Activated CD4-positive, alpha-beta T cell treated with anti-CD3 and anti-CD28 coated beads for 36 hours (primary cell): ENCODE measurements at regions of chr6 and their contacts with region 1.

Region 1: DNA sequence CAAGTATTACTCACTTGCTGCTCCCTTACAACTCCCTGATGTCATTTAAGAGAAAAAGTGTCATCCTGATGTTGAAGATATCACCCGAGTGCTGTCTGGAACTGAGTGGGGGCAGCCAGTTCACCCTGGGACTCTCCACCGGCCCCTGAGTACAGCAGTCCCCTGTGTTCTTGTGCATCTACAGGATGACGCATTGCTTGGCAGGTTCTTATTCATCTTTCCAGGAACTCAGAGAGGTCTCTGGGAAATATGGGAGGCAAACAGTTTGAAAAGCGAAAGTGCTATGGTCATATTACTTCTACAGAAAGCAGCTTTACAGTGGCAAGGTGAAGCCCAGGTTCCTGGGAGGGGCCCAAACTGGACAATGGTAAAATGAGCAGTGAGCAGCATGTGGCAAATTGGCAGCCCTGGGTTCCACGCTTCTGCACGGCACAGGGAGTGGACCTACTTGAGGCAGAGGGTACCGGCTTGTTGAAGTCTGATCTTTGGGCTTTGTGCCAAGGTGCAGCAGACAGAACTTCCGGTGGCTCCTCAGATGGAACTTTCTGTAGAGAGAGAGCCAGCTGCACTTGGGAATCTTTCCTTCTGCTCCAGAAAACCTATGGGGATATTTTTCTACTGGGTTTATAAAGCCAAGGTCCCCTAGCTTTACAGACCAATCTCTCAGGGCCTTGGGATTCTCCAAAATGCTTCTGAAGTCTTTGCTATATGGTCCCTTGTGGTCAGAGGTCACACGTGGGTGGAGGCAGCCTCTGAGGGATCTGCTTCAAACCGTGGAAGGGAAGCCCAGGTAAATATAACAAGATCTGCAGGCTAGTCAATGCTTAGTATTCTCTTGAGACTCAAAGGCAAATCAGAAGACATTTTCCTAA is 128.3 kb downstream of the MAP3K7 start:
- DNase-seq: peak; percentile 93
- ATAC-seq: peak; percentile 89
- H3K4me3 Mint-ChIP-seq: peak overlapping the region; percentile 63
- H3K27ac Mint-ChIP-seq: peak overlapping the region; percentile 99
- H3K4me1 Mint-ChIP-seq: peaks cover 92% of the 10 kb centered on the region
- H3K27me3 Mint-ChIP-seq: no peaks in the 10 kb centered on the region

Region 2: DNA sequence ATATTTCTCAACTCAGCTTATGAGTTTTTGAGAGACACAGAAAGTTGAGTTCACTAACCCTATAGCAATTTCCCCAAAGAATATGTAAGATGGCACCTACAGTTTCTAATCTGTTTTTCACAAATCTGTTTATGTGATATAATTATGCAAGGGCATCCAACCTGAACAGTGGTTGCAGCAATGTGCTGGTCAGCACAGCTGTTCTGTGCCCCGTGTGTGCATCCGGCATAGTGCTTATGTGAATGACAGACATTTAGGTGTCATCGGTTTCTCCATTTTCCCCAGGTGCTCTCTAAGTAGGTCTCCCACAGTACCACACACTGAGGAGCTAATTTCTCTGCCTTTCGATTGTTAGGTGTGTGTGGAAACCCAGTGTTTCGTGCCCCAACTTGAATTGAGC is 154.3 kb before region 1 on chr6:
- CTCF ChIA-PET with region 1: no interaction called
- POLR2A ChIA-PET with region 1: no interaction called
- intact Hi-C with region 1: no loop called
- DNase-seq: no peak
- ATAC-seq: no peak
- H3K4me3 Mint-ChIP-seq: no peak overlapping the region
- H3K27ac Mint-ChIP-seq: no peak overlapping the region
- H3K4me1 Mint-ChIP-seq: peaks cover 39% of the 10 kb centered on the region
- H3K27me3 Mint-ChIP-seq: peaks cover 20% of the 10 kb centered on the region

Region 3: DNA sequence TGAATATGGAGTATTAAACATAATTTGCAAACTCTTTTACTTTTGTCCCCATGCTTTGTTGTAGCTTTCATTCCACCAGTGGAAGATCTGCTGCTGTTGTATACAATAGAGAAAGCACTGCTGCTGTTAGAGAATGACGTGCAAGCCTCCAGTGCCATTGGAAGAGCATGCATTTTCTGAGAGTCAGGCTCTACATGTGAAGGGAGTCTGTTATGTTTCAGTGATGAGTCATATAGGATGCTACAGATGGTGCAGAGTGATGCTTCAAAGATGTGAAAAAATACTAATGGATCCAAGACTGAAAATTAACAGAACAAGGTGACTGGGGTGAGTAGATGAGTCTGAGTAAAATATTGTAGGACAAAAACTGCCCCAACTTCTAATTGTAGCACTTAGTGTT is 139.5 kb before region 1 on chr6:
- CTCF ChIA-PET with region 1: interaction called, 5 read pairs
- POLR2A ChIA-PET with region 1: no interaction called
- intact Hi-C with region 1: loop called in 1 of 2 experiments (anchors 1 kb)
- DNase-seq: peak; percentile 40
- ATAC-seq: peak; percentile 82
- H3K4me3 Mint-ChIP-seq: no peak overlapping the region
- H3K27ac Mint-ChIP-seq: peak overlapping the region; percentile 80
- H3K4me1 Mint-ChIP-seq: peaks cover 43% of the 10 kb centered on the region
- H3K27me3 Mint-ChIP-seq: peaks cover 6% of the 10 kb centered on the region

Region 4: DNA sequence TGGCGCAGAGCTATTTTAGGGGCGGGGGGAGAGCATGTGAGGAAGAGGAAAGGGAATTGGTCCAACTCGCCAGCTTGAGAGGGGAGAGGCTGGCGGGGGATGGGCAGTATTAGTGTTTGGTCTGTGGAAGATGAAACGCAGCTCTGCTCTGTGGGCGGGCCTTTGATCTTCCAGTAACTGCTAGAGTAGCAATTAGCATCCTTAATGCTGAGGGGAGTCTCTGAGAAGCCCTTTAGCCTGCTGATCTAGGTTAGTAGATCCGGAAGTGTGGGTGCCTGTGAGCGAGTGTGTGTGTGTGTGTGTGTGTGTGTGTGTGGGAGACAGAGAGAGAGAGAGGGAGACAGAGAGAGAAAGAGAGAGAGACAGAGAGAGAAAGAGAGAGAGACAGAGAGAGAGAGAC is 44.7 kb before region 1 on chr6:
- CTCF ChIA-PET with region 1: interaction called, 29 read pairs
- POLR2A ChIA-PET with region 1: interaction called, 10 read pairs
- intact Hi-C with region 1: loop called (anchors 1 kb)
- DNase-seq: peak; percentile 91
- ATAC-seq: peak; percentile 51
- H3K4me3 Mint-ChIP-seq: peak overlapping the region; percentile 67
- H3K27ac Mint-ChIP-seq: peak overlapping the region; percentile 93
- H3K4me1 Mint-ChIP-seq: peaks cover 72% of the 10 kb centered on the region
- H3K27me3 Mint-ChIP-seq: no peaks in the 10 kb centered on the region

Region 5: GRCh38 chr6:90444160-90444714 is 14.4 kb before region 1 on chr6:
- CTCF ChIA-PET with region 1: interaction called, 12 read pairs
- POLR2A ChIA-PET with region 1: interaction called, 5 read pairs
- intact Hi-C with region 1: loop called (anchors 1 kb)
- DNase-seq: no peak
- ATAC-seq: peak; percentile 42
- H3K4me3 Mint-ChIP-seq: peak overlapping the region; percentile 20
- H3K27ac Mint-ChIP-seq: peak overlapping the region; percentile 99
- H3K4me1 Mint-ChIP-seq: peaks cover 58% of the 10 kb centered on the region
- H3K27me3 Mint-ChIP-seq: no peaks in the 10 kb centered on the region

Region 6: DNA sequence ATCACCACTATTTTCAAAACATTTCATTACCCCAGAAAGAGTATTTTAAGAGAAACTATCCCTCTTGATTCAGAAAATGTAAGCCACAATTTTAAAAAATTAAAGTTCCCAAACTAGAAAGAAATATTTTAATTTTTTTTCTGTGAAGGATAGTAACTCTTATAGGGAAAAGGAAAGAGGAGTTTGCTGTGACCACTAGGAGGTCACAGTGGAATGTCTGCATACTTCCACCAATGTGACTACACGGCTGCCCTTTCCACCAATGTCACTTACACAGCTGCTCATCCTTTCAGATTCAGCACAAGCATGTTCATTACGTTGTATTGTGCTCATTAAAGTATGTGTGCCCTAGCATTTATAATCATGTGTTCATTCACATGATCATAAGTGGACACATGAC is 1062.7 kb after region 1 on chr6:
- CTCF ChIA-PET with region 1: no interaction called
- POLR2A ChIA-PET with region 1: no interaction called
- intact Hi-C with region 1: no loop called
- DNase-seq: no peak
- ATAC-seq: no peak
- H3K4me3 Mint-ChIP-seq: no peak overlapping the region
- H3K27ac Mint-ChIP-seq: no peak overlapping the region
- H3K4me1 Mint-ChIP-seq: no peaks in the 10 kb centered on the region
- H3K27me3 Mint-ChIP-seq: no peaks in the 10 kb centered on the region